IMR-90 (cell line): ENCODE measurements at regions of chr12 and their contacts with region 1.

Region 1: DNA sequence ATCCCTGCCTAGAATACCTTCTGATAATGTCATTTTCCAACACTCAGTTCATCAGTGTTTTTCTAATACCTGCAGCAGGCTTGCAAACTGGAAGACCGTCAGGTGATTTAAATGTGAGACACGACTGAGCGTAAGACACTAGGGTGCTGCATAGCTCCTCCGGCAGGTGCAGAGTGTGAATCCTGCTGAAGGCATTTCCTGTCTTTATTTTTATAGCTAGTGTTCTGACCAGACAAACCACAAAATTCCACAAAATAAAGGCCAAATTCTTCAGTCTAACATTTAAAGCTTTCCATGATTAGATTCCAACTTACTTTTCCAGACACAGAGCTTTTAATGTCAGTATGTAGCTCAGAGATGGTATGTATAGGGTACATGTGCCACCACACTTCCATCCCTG is 70.7 kb downstream of the BBS10 start:
- DNase-seq: peak; percentile 87
- ATAC-seq: peak; percentile 72
- H3K4me3 ChIP-seq: no peak overlapping the region
- H3K27ac ChIP-seq: peak overlapping the region; percentile 52
- H3K4me1 ChIP-seq: peaks cover 27% of the 10 kb centered on the region
- H3K27me3 ChIP-seq: no peaks in the 10 kb centered on the region
- CTCF ChIP-seq: no peak
- POLR2A ChIP-seq: no peak
- RAD21 ChIP-seq: no peak

Region 2: GRCh38 chr12:76329163-76329562 is 51.7 kb after region 1 on chr12:
- CTCF ChIA-PET with region 1: no interaction called
- POLR2A ChIA-PET with region 1: no interaction called
- dilution Hi-C with region 1: no loop called
- in situ Hi-C with region 1: no loop called
- intact Hi-C with region 1: loop called (anchors 5 kb)
- DNase-seq: peak; percentile 86
- ATAC-seq: peak; percentile 91
- H3K4me3 ChIP-seq: no peak overlapping the region
- H3K27ac ChIP-seq: no peak overlapping the region
- H3K4me1 ChIP-seq: no peaks in the 10 kb centered on the region
- H3K27me3 ChIP-seq: no peaks in the 10 kb centered on the region
- CTCF ChIP-seq: no peak
- POLR2A ChIP-seq: no peak
- RAD21 ChIP-seq: no peak